CD8-positive, alpha-beta T cell (primary cell): ENCODE measurements at regions of chr10 and their contacts with region 1.

Region 1: DNA sequence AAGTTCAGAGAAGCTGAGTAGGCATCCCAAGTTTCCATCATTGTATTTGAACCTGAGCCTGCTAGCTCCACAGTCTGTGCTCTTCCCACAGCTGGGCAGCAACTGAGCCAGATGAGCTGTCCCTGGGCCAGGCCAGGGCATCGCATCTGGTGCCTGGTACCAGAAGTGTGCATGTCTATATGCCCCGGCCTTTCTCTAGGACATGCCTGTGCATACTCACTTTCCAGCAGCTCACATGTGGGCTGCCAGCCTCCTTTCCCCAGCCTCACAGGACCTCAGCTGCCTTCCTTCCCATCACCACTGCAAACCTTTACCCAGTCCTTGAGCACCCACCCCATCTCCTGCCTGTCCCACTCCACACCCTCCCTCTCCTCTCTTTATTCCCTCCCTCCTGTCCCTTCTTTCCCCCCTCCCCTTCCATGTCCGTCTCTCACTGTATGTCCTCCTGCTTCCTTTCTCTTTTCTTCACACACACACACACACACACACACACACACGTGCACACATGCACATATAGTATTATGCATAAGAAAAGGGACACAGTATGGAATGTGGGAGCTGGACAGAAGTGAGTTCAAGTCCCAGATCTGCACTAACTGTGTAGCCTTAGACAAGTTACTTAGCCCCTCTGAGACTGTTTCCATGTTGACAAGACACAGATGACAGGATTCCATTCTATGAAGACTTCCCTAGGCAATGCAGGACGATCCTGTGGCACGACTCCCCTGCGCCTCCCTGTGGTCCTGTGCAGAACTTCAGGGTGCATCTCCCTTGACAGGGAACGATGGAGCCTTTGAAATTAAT is 10.9 kb downstream of the CDHR1 start:
- DNase-seq: peak; percentile 41 to 80 (median 75)
- ATAC-seq: peak; percentile 97
- H3K4me3 ChIP-seq: no peak overlapping the region
- H3K4me3 Mint-ChIP-seq: no peak overlapping the region
- H3K27ac ChIP-seq: no peak overlapping the region
- H3K27ac Mint-ChIP-seq: no peak overlapping the region
- H3K4me1 ChIP-seq: no peaks in the 10 kb centered on the region
- H3K4me1 Mint-ChIP-seq: no peaks in the 10 kb centered on the region
- H3K27me3 ChIP-seq: no peaks in the 10 kb centered on the region
- H3K27me3 Mint-ChIP-seq: no peaks in the 10 kb centered on the region
- CTCF ChIP-seq: peak; percentile 81

Region 2: GRCh38 chr10:84059523-84059922 is 145.7 kb before region 1 on chr10:
- CTCF ChIA-PET with region 1: interaction called, 8 read pairs
- POLR2A ChIA-PET with region 1: interaction called, 4 read pairs
- intact Hi-C with region 1: loop called in 1 of 2 experiments (anchors 2 kb)
- DNase-seq: no peak
- ATAC-seq: no peak
- H3K4me3 ChIP-seq: no peak overlapping the region
- H3K4me3 Mint-ChIP-seq: no peak overlapping the region
- H3K27ac ChIP-seq: no peak overlapping the region
- H3K27ac Mint-ChIP-seq: no peak overlapping the region
- H3K4me1 ChIP-seq: no peaks in the 10 kb centered on the region
- H3K4me1 Mint-ChIP-seq: no peaks in the 10 kb centered on the region
- H3K27me3 ChIP-seq: no peaks in the 10 kb centered on the region
- H3K27me3 Mint-ChIP-seq: peaks cover 20% of the 10 kb centered on the region
- CTCF ChIP-seq: no peak

Region 3: DNA sequence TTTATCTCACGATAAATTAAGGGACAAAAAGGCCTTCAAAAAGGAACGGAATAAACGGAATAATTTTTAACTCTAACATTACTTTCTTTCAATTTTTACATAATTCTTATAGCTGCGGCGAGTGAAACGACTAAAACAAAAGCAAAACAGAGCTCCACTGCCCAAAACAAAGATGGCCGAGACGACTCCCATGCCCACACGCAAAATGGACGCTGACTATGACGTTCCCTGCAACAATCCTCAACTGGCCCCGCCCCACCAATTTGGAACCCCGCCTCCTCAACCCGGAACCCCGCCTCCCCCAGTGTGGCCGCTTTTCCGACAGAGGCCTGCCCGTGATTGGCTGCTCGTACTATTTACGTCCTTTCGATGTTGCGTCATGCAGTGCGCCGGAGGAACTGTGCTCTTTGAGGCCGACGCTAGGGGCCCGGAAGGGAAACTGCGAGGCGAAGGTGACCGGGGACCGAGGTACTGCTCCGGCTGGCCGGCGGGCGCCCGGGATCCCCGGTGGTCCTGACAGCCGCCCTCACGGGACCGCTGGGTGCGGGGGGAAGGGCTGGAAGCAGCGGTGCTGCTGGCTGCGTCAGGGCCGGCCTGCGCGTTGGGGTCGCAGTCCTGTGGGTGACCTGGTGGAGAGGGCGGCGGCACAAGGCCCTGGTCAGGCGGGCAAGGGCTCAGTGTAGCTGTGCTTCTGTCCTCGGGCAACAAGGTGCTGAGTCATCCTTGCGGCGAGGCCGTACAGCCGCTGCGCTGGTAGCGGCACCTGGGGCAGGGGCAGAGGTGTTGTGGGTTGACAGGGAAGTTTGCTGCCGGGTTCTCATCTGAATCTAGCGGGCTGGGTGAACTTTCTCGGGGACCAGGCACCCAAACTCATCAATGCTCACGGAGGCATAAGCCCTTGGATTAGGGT is 65.9 kb before region 1 on chr10 and contains the start of gene GHITM:
- CTCF ChIA-PET with region 1: interaction called, 372 read pairs
- POLR2A ChIA-PET with region 1: interaction called, 3 read pairs
- intact Hi-C with region 1: no loop called
- DNase-seq: peak; percentile 98 to 100 (median 99)
- ATAC-seq: peak; percentile 95
- H3K4me3 ChIP-seq: peak within 1 kb of the TSS; percentile 85 to 97
- H3K4me3 Mint-ChIP-seq: peak within 1 kb of the TSS; percentile 97
- H3K27ac ChIP-seq: peak within 1 kb of the TSS; percentile 99
- H3K27ac Mint-ChIP-seq: peak within 1 kb of the TSS; percentile 99
- H3K4me1 ChIP-seq: peaks cover 20% of the 10 kb centered on the region
- H3K4me1 Mint-ChIP-seq: peaks cover 35% of the 10 kb centered on the region
- H3K27me3 ChIP-seq: no peaks in the 10 kb centered on the region
- H3K27me3 Mint-ChIP-seq: no peaks in the 10 kb centered on the region
- CTCF ChIP-seq: peak; percentile 33
- total RNA-seq, gene GHITM: 72.3 to 76.3 TPM

Region 4: GRCh38 chr10:84152769-84153168 is 52.5 kb before region 1 on chr10:
- CTCF ChIA-PET with region 1: interaction called, 372 read pairs
- POLR2A ChIA-PET with region 1: interaction called, 6 read pairs
- intact Hi-C with region 1: loop called (anchors 1 kb)
- DNase-seq: no peak
- ATAC-seq: no peak
- H3K4me3 ChIP-seq: no peak overlapping the region
- H3K4me3 Mint-ChIP-seq: no peak overlapping the region
- H3K27ac ChIP-seq: no peak overlapping the region
- H3K27ac Mint-ChIP-seq: no peak overlapping the region
- H3K4me1 ChIP-seq: peaks cover 6% of the 10 kb centered on the region
- H3K4me1 Mint-ChIP-seq: peaks cover 17% of the 10 kb centered on the region
- H3K27me3 ChIP-seq: no peaks in the 10 kb centered on the region
- H3K27me3 Mint-ChIP-seq: no peaks in the 10 kb centered on the region
- CTCF ChIP-seq: no peak

Region 5: GRCh38 chr10:84177541-84178141 is 27.6 kb before region 1 on chr10:
- CTCF ChIA-PET with region 1: interaction called, 11 read pairs
- POLR2A ChIA-PET with region 1: interaction called, 4 read pairs
- intact Hi-C with region 1: no loop called
- DNase-seq: peak; percentile 24 to 88 (median 55)
- ATAC-seq: peak; percentile 91
- H3K4me3 ChIP-seq: peak overlapping the region; percentile 10 to 17
- H3K4me3 Mint-ChIP-seq: no peak overlapping the region
- H3K27ac ChIP-seq: peak overlapping the region; percentile 13 to 69
- H3K27ac Mint-ChIP-seq: no peak overlapping the region
- H3K4me1 ChIP-seq: peaks cover 31% of the 10 kb centered on the region
- H3K4me1 Mint-ChIP-seq: peaks cover 12% of the 10 kb centered on the region
- H3K27me3 ChIP-seq: peaks cover 0 to 2% of the 10 kb centered on the region in 2 experiments
- H3K27me3 Mint-ChIP-seq: no peaks in the 10 kb centered on the region
- CTCF ChIP-seq: no peak

Region 6: DNA sequence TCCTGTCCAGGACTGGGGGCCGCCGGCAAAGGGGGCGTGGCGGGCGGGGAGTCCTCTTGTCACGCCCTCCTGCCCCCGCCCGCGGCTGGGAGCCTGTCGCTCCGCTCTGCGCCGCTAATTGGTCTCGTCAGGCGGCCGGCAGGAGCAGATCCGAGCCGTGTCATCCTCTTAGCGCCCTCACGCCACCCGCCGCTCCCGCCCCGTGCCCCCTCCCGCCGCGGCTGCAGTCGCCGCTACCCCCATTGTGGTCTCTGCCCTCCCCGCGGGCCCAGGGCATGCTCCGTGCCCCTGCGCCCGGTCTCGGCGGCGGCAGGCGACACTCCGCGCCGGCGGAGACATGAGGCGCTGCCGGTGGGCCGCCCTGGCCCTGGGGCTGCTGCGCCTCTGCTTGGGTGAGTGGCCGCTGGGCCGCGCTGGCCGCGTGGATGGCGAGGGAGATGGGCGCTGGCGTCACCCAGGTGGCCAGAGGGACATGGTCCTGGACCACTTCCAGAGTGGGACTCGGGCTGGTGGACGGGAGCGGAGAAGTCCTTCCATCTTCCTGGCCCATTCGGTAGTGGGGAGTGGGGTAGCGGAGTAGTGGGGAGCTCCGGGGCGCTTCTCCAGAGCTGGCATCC is 10.7 kb before region 1 on chr10 and contains the start of gene CDHR1:
- CTCF ChIA-PET with region 1: interaction called, 13 read pairs
- POLR2A ChIA-PET with region 1: no interaction called
- intact Hi-C with region 1: no loop called
- DNase-seq: peak; percentile 12 to 79 (median 52)
- ATAC-seq: peak; percentile 70
- H3K4me3 ChIP-seq: peak within 1 kb of the TSS; percentile 49 to 56
- H3K4me3 Mint-ChIP-seq: peak within 1 kb of the TSS; percentile 77
- H3K27ac ChIP-seq: no peak within 1 kb of the TSS
- H3K27ac Mint-ChIP-seq: no peak within 1 kb of the TSS
- H3K4me1 ChIP-seq: peaks cover 26% of the 10 kb centered on the region
- H3K4me1 Mint-ChIP-seq: peaks cover 27% of the 10 kb centered on the region
- H3K27me3 ChIP-seq: peaks cover 0 to 6% of the 10 kb centered on the region in 2 experiments
- H3K27me3 Mint-ChIP-seq: peaks cover 9% of the 10 kb centered on the region
- CTCF ChIP-seq: no peak
- total RNA-seq, gene CDHR1: 1.5 to 1.7 TPM

Region 7: GRCh38 chr10:84765656-84766055 is 560.4 kb after region 1 on chr10:
- CTCF ChIA-PET with region 1: no interaction called
- POLR2A ChIA-PET with region 1: no interaction called
- intact Hi-C with region 1: no loop called
- DNase-seq: no peak
- ATAC-seq: no peak
- H3K4me3 ChIP-seq: no peak overlapping the region
- H3K4me3 Mint-ChIP-seq: no peak overlapping the region
- H3K27ac ChIP-seq: no peak overlapping the region
- H3K27ac Mint-ChIP-seq: no peak overlapping the region
- H3K4me1 ChIP-seq: no peaks in the 10 kb centered on the region
- H3K4me1 Mint-ChIP-seq: no peaks in the 10 kb centered on the region
- H3K27me3 ChIP-seq: no peaks in the 10 kb centered on the region
- H3K27me3 Mint-ChIP-seq: peaks cover 5% of the 10 kb centered on the region
- CTCF ChIP-seq: no peak